ENCODE measurements at regions of chr13 and their contacts with region 1.

Region 1: DNA sequence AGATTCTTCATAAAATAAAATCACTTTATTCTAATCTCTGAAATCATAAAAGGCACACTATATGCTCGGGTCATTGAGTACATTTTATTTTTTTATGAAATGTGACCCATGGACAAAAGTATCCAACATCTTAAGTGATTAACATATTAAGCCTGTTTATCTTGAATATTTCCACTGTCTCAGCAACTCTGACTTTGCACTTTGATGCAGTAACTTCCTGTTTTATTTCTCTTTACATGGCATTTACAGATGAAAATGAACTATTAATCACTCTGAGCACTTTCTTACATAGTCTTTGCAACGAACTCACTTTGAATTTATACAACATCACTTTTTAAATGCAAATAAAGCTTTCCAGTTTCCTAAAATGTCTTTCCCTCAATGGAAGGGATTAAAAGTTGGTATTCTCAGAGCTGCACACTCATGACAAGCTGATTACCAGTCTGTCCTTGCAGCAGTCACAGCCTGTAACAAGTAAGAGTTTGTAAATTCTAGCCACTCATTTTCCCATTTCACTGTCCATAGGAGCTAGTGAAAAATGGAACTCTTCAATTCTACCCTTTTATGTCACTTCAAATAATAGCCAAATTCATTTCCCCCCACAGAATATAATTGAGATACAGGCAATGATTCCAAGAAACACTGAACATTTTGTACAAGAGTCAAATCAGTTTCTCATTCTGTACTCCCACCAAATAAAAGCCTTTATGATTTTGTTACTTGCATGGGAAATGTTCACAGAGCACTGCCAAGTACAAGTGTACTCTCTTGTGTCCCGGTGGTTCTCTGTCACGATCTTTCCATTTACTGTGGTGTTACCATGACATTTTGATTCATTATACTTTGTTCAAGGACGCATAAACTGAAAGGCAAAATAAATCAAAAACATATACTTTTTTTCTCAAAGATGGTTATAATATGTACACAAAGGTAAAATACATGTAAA is 1968.9 kb downstream of the PCDH9 start:
- DNase-seq: no peak
- ATAC-seq: no peak
- H3K4me3 ChIP-seq: no peak overlapping the region
- H3K27ac ChIP-seq: no peak overlapping the region
- H3K4me1 ChIP-seq: no peaks in the 10 kb centered on the region
- H3K27me3 ChIP-seq: no peaks in the 10 kb centered on the region
- CTCF ChIP-seq: no peak

Region 2: GRCh38 chr13:64871742-64872141 is 389.5 kb before region 1 on chr13:
- intact Hi-C with region 1: no loop called
- DNase-seq: no peak
- ATAC-seq: no peak
- H3K4me3 ChIP-seq: no peak overlapping the region
- H3K27ac ChIP-seq: no peak overlapping the region
- H3K4me1 ChIP-seq: no peaks in the 10 kb centered on the region
- H3K27me3 ChIP-seq: no peaks in the 10 kb centered on the region
- CTCF ChIP-seq: no peak

Region 3: DNA sequence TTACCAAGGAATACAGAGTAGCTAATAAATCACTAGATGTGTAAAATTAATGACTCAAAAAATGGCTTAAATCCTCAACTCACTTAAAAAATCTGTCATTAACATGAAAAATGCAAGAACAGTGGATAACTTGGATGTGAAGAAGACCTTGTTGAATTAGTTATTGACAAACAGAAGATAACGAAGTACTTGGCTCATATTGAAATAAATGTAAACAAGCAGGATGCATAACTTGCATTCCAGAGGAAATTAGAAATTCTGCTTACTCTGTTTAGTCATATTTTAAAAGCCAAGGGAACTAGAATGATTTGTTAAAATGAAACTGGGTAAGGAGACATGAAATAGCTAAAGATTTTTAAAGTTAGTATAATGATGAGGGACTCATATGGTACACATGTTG is 156.7 kb after region 1 on chr13:
- intact Hi-C with region 1: loop called in 1 of 3 experiments (anchors 10 kb)
- DNase-seq: no peak
- ATAC-seq: no peak
- H3K4me3 ChIP-seq: no peak overlapping the region
- H3K27ac ChIP-seq: no peak overlapping the region
- H3K4me1 ChIP-seq: no peaks in the 10 kb centered on the region
- H3K27me3 ChIP-seq: no peaks in the 10 kb centered on the region
- CTCF ChIP-seq: no peak

Region 4: DNA sequence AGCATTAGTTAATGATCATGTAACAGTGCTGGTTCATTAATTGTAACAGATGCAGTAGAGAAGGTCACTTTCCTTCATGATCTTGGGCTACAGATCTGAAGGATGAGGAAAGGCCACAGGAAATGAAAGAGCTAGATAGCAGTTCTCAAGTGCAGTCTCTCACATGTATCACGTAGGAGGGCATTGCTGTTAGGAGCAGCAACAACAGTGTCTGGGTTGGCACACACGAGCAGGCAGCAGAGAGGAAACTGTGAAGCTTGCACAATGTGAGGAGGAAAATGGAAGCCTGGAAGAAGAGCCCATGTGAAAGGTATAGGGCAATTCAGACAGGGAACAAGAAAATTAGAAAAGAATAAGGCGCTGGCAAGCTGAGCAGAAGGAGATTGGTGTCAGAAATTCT is 227.4 kb after region 1 on chr13:
- intact Hi-C with region 1: no loop called
- DNase-seq: peak in 1 of 6 donors; percentile 6
- ATAC-seq: no peak
- H3K4me3 ChIP-seq: no peak overlapping the region
- H3K27ac ChIP-seq: no peak overlapping the region
- H3K4me1 ChIP-seq: no peaks in the 10 kb centered on the region
- H3K27me3 ChIP-seq: no peaks in the 10 kb centered on the region
- CTCF ChIP-seq: no peak